ENCODE measurements at regions of chr1 and their contacts with region 1.

Region 1: DNA sequence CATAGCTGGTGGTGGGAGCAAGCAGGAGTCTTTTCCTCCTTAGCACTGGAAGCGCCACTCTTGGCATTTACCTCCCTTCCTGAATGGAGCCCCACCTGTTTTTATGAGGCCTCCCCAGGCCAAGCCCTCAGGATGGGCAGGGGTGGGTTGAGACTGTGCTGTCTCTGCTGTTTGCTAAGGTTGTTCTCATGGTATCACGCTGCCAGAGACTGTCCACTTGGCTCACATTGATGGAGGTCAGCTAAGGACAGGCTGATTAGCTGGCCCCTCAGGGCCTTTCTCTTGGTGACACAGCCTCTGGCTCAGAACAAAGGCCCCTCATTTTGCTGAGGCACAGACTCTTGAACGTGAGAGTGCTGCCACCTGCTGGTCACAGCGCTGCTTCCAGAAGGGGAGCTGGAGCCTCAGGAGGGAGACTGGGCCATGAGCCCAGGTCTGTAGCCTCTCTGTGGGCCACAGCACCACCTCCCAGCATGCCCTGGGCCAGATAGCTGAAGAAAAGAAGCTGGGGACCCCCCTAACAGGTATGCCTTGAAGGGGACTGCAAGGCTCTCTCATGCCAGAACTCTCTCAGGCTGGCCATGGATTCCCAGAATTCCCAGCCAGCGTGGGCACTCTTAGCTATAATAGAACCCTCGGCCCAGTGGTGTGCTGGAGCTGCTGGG is 85.6 kb downstream of the CD58 start:
- DNase-seq: peak; percentile 65
- H3K4me3 ChIP-seq: no peak overlapping the region
- H3K27ac ChIP-seq: no peak overlapping the region
- H3K4me1 ChIP-seq: peaks cover 54% of the 10 kb centered on the region
- H3K27me3 ChIP-seq: no peaks in the 10 kb centered on the region
- CTCF ChIP-seq: peak; percentile 72 to 94

Region 2: DNA sequence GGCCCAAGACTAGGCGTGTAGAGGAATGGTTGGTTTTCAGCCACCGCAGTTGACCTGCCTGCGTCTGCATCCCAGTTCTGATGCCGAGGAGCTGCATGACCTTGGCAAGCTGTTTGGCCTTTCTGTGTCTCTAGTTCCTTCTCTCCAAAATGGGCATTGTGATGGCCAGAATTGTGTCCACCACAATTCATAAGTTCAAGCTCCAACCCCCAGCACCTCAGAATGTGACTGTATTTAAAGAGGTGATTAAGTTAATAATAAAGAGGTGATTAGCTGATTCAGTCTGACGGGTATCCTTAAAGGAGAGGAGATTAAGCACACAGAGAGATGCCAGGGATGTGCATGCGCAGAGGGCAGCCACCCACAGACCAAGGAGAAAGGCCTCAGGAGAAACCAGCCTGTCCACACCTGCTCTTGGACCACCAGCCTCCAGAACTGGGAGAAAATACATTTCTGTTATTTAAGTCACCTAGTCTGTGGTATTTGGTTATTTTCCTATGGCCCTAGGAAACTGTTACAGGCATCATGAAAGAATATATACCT is 345.5 kb before region 1 on chr1:
- CTCF ChIA-PET with region 1: interaction called, 16 read pairs
- dilution Hi-C with region 1: no loop called
- in situ Hi-C with region 1: loop called in 1 of 2 experiments (anchors 5 kb)
- intact Hi-C with region 1: loop called (anchors 1 kb)
- DNase-seq: no peak
- H3K4me3 ChIP-seq: no peak overlapping the region
- H3K27ac ChIP-seq: no peak overlapping the region
- H3K4me1 ChIP-seq: no peaks in the 10 kb centered on the region
- H3K27me3 ChIP-seq: no peaks in the 10 kb centered on the region
- CTCF ChIP-seq: no peak

Region 3: DNA sequence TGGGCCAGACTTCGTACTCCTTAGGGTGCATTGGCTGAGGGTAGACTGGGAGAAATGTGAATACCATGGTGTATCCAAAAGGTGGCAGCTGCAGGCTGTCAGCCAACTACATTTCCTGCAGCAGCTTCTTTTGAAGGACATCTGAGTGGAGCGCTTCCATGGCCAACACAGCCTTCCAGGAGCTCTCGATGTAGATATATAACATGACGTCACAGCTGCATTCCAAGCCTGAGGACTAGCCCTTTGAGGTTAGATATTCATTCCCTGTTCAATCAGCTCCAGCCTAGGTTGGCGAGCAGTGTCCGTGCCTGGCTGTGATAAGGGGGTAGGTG is 266.2 kb before region 1 on chr1:
- CTCF ChIA-PET with region 1: no interaction called
- dilution Hi-C with region 1: no loop called
- in situ Hi-C with region 1: no loop called
- intact Hi-C with region 1: loop called (anchors 5 kb)
- DNase-seq: no peak
- H3K4me3 ChIP-seq: no peak overlapping the region
- H3K27ac ChIP-seq: no peak overlapping the region
- H3K4me1 ChIP-seq: no peaks in the 10 kb centered on the region
- H3K27me3 ChIP-seq: no peaks in the 10 kb centered on the region
- CTCF ChIP-seq: peak in 1 of 2 donors; percentile 17

Region 4: DNA sequence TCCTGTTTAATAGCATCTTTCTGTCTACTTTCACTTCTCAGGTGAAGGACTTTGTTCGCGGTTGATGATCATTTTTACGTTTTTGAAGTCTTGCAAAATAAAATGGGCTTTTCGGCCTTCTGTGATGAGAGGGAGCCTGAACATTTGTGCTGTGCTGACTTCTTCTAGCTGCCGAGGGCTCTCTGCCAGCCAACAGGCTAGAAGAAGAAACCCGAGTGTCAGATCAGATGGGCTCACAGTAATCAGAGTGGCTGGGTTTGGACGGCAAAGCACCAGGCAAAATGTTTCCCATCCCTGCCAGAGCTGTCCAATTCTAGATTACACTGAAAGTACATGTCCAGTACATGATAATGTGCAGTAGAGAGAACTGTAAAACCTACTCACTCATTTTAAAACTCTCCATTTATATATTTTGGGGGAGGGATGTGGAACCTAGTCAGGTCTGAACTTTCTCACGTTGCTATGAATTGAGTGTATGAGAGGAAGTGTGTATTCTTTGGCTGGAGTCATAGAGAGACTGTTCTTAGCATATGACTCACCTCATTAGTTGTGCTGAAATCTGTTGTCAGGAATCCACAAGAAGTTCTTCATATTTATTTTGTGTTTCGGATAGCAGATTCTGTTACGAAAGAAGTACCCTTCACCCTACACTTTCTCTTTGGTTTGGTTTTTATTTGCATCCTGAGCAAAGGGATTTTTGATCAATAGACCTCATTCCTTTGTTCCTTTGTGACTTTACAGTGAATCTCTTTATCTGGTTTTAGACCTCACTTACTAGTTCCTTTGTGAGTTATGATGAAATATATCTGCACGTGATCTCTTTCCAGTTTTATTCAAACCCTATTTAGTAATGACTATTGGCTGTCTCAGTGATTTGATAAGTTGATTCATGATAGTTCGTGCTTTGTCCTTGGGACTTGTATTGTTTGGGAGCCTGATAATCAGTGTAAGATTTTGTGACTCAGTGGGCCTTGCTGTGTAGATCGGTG is 107.4 kb before region 1 on chr1:
- CTCF ChIA-PET with region 1: no interaction called
- dilution Hi-C with region 1: no loop called
- in situ Hi-C with region 1: loop called in 1 of 2 experiments (anchors 25 kb)
- intact Hi-C with region 1: no loop called
- DNase-seq: peak; percentile 92
- H3K4me3 ChIP-seq: peak overlapping the region; percentile 23 to 37 (median 31)
- H3K27ac ChIP-seq: peak overlapping the region; percentile 95
- H3K4me1 ChIP-seq: peaks cover 53% of the 10 kb centered on the region
- H3K27me3 ChIP-seq: no peaks in the 10 kb centered on the region
- CTCF ChIP-seq: no peak

Region 5: GRCh38 chr1:116498789-116499628 is 13.8 kb after region 1 on chr1:
- CTCF ChIA-PET with region 1: interaction called, 8 read pairs
- dilution Hi-C with region 1: no loop called
- in situ Hi-C with region 1: no loop called
- intact Hi-C with region 1: loop called (anchors 1 kb)
- DNase-seq: peak; percentile 60
- H3K4me3 ChIP-seq: no peak overlapping the region
- H3K27ac ChIP-seq: no peak overlapping the region
- H3K4me1 ChIP-seq: peaks cover 13% of the 10 kb centered on the region
- H3K27me3 ChIP-seq: no peaks in the 10 kb centered on the region
- CTCF ChIP-seq: peak; percentile 82 to 84

Region 6: GRCh38 chr1:116514708-116515525 is 29.7 kb after region 1 on chr1:
- CTCF ChIA-PET with region 1: no interaction called
- dilution Hi-C with region 1: no loop called
- in situ Hi-C with region 1: no loop called
- intact Hi-C with region 1: no loop called
- DNase-seq: peak; percentile 86
- H3K4me3 ChIP-seq: no peak overlapping the region
- H3K27ac ChIP-seq: no peak overlapping the region
- H3K4me1 ChIP-seq: peaks cover 8% of the 10 kb centered on the region
- H3K27me3 ChIP-seq: no peaks in the 10 kb centered on the region
- CTCF ChIP-seq: no peak

Measured in mammary epithelial cell (primary cell).